Activated T-helper 1 cell treated with anti-CD3 and anti-CD28 coated beads, Interleukin-12 subunit alpha, Interleukin-12 subunit beta, Interleukin-2, Interleukin-4 antibody, amounts not matched to agents 30 ng/mL and 10 ng/mL and 1 ng/mL, durations not matched to agents 14 hours and 24 hours and 36 hours (primary cell): ENCODE measurements at regions of chr14 and their contacts with region 1.

Region 1: DNA sequence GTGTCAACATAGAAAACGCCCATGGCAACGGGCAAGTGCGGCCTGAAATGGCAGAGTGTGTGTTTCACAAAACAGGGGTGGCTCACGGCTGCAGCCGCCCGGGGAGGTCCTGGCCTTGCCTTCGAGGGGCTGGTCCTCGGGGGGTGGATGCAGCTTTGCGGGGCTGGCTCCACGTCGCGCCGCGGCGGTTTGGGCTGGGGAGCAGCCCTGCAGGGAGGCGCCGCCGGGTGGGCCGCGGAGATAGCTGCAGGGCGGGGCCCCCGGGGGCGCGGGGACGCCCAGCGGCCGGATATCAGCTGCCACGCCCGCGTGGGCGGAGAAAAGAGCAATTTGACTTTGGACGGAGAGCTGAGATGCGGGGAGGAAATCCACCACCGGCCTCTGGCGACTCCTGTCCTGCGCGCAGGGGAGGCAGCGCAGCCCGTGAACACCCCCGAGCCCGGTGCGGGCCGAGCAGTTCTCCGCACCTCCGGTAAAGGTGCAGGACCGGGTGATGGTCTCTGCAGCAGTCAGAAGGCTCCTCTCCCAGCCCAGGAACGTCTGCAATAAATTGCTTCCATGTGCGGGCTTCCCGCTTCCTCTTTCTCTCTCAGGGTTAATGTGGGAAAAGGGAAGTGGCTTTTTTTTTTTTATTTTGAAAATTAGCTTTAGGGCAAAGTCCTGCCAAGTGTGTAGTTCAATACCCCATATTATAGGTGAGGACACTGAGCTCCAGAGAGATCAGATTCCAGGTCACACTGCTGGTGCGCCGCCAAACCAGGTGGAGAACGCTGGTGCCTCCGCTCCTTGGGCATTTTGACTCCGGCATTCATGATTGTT is 110.5 kb downstream of the ARF6 start:
- DNase-seq: peak; percentile 81
- H3K4me3 Mint-ChIP-seq: peak overlapping the region; percentile 88
- H3K27ac Mint-ChIP-seq: peak overlapping the region; percentile 98
- H3K4me1 Mint-ChIP-seq: peaks cover 68% of the 10 kb centered on the region
- H3K27me3 Mint-ChIP-seq: no peaks in the 10 kb centered on the region

Region 2: GRCh38 chr14:49867831-49868723 is 135.3 kb before region 1 on chr14:
- intact Hi-C with region 1: loop called (anchors 1 kb)
- DNase-seq: peak; percentile 92
- H3K4me3 Mint-ChIP-seq: peak overlapping the region; percentile 93
- H3K27ac Mint-ChIP-seq: peak overlapping the region; percentile 97
- H3K4me1 Mint-ChIP-seq: peaks cover 20% of the 10 kb centered on the region
- H3K27me3 Mint-ChIP-seq: no peaks in the 10 kb centered on the region

Region 3: GRCh38 chr14:49959822-49960408 is 43.5 kb before region 1 on chr14:
- intact Hi-C with region 1: loop called (anchors 1 kb)
- DNase-seq: peak; percentile 17
- H3K4me3 Mint-ChIP-seq: peak overlapping the region; percentile 37
- H3K27ac Mint-ChIP-seq: peak overlapping the region; percentile 43
- H3K4me1 Mint-ChIP-seq: peaks cover 52% of the 10 kb centered on the region
- H3K27me3 Mint-ChIP-seq: no peaks in the 10 kb centered on the region

Region 4: GRCh38 chr14:50021261-50022031 is 18.0 kb after region 1 on chr14:
- intact Hi-C with region 1: loop called (anchors 1 kb)
- DNase-seq: no peak
- H3K4me3 Mint-ChIP-seq: peak overlapping the region; percentile 31
- H3K27ac Mint-ChIP-seq: peak overlapping the region; percentile 71
- H3K4me1 Mint-ChIP-seq: peaks cover 38% of the 10 kb centered on the region
- H3K27me3 Mint-ChIP-seq: no peaks in the 10 kb centered on the region

Region 5: GRCh38 chr14:50082784-50083466 is 79.5 kb after region 1 on chr14:
- intact Hi-C with region 1: loop called (anchors 1 kb)
- DNase-seq: peak; percentile 84
- H3K4me3 Mint-ChIP-seq: peak overlapping the region; percentile 16
- H3K27ac Mint-ChIP-seq: peak overlapping the region; percentile 90
- H3K4me1 Mint-ChIP-seq: peaks cover 70% of the 10 kb centered on the region
- H3K27me3 Mint-ChIP-seq: no peaks in the 10 kb centered on the region

Region 6: GRCh38 chr14:50311975-50312733 is 308.7 kb after region 1 on chr14 and contains the starts of genes DMAC2L and L2HGDH:
- intact Hi-C with region 1: loop called (anchors 1 kb)
- DNase-seq: peak; percentile 92
- H3K4me3 Mint-ChIP-seq: peak within 1 kb of the TSS; percentile 92
- H3K27ac Mint-ChIP-seq: peak within 1 kb of the TSS; percentile 99
- H3K4me1 Mint-ChIP-seq: peaks cover 46% of the 10 kb centered on the region
- H3K27me3 Mint-ChIP-seq: peaks cover 2% of the 10 kb centered on the region
- total RNA-seq, gene DMAC2L: 14.4 and 17.9 TPM in 2 replicates
- total RNA-seq, gene L2HGDH: 14.7 and 16.2 TPM in 2 replicates